Activated CD4-positive, alpha-beta memory T cell treated with anti-CD3 and anti-CD28 coated beads, Interleukin-2, amount 10 ng/mL, durations not matched to agents 7 days and 5 days (primary cell): ENCODE measurements at regions of chr4 and their contacts with region 1.

Region 1: DNA sequence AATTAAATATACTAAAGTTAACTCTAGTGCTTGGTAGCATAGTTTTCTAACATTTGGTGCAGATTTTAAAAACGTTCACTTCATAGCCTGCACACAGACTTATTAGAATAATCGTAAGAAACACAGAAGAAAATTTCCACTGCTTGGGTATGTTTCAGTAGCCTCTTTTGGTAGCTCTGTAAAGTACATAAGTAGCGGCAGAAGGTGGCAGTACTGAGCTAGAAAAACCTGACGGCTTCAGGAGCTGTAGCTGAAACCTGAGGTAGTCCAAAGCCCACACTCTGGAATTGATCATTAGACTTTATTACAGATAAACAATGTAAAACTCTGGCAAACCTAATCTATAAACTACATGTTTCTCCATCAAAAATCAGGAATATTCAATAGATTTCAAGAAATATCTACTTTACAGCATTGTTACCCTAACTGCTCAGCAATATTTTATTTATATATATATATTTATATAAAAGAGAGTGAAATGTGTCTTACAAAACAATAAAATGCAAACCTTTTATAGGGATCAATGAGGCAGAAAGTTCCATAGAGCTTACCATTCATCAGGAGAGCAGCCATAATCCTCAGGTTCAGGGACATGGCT is 88.2 kb downstream of the ATP8A1 start:
- DNase-seq: peak; percentile 63
- H3K4me3 Mint-ChIP-seq: no peak overlapping the region
- H3K27ac Mint-ChIP-seq: no peak overlapping the region
- H3K4me1 Mint-ChIP-seq: no peaks in the 10 kb centered on the region
- H3K27me3 Mint-ChIP-seq: no peaks in the 10 kb centered on the region

Region 2: GRCh38 chr4:42541647-42542046 is 27.1 kb before region 1 on chr4:
- CTCF ChIA-PET with region 1: no interaction called
- POLR2A ChIA-PET with region 1: no interaction called
- DNase-seq: no peak
- H3K4me3 Mint-ChIP-seq: no peak overlapping the region
- H3K27ac Mint-ChIP-seq: no peak overlapping the region
- H3K4me1 Mint-ChIP-seq: peaks cover 6% of the 10 kb centered on the region
- H3K27me3 Mint-ChIP-seq: no peaks in the 10 kb centered on the region

Region 3: DNA sequence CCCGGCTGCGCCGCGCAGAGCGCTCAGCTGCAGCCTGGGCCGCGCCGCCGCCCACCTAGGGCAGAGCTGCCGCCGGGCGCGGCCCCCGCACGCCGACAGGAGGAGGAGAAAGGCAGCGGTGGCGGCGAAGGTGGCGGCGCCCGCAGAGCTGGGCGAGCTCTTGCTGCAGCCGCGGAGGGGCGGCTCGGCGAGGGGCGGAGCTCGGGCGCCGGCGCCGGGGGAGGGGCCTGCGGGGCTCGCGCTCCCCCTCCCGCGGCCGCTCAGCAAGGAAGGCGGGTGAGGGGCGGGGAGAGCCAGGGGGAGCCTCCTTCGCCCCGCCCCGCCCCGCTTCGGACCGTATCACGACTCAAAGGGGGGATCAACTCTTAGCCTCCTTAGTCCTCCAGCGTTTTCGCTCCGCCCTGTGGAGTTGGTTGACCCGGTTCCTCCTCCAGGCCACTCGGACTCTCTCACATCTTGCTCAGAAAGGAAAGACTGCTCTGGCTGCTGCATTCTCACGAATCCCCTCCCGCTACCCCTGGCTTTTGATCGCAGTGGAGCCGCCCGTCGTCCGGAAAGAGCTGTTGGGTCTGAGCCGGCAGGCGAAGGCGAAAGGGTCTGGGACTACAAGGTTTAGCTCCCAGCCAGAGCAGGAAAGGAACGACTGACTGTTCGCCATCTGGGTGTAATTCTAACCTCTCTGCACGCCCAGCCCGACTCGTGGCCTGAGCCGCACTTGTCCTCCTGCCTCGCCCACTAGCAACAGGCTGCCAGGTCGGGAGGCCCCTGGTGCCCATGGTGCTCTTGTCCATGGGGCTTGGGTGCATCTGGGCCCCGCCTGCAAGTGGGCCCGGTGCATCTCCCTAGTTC is 88.5 kb after region 1 on chr4 and contains the start of gene ATP8A1:
- CTCF ChIA-PET with region 1: interaction called, 16 read pairs
- POLR2A ChIA-PET with region 1: no interaction called
- DNase-seq: peak; percentile 94
- H3K4me3 Mint-ChIP-seq: peak within 1 kb of the TSS; percentile 93
- H3K27ac Mint-ChIP-seq: peak within 1 kb of the TSS; percentile 96
- H3K4me1 Mint-ChIP-seq: peaks cover 38% of the 10 kb centered on the region
- H3K27me3 Mint-ChIP-seq: peaks cover 7% of the 10 kb centered on the region
- total RNA-seq, gene ATP8A1: 18.7 to 19.8 TPM

Region 4: GRCh38 chr4:42750091-42750490 is 181.4 kb after region 1 on chr4:
- CTCF ChIA-PET with region 1: interaction called, 12 read pairs
- POLR2A ChIA-PET with region 1: no interaction called
- DNase-seq: no peak
- H3K4me3 Mint-ChIP-seq: no peak overlapping the region
- H3K27ac Mint-ChIP-seq: no peak overlapping the region
- H3K4me1 Mint-ChIP-seq: no peaks in the 10 kb centered on the region
- H3K27me3 Mint-ChIP-seq: peaks cover 3% of the 10 kb centered on the region

Region 5: DNA sequence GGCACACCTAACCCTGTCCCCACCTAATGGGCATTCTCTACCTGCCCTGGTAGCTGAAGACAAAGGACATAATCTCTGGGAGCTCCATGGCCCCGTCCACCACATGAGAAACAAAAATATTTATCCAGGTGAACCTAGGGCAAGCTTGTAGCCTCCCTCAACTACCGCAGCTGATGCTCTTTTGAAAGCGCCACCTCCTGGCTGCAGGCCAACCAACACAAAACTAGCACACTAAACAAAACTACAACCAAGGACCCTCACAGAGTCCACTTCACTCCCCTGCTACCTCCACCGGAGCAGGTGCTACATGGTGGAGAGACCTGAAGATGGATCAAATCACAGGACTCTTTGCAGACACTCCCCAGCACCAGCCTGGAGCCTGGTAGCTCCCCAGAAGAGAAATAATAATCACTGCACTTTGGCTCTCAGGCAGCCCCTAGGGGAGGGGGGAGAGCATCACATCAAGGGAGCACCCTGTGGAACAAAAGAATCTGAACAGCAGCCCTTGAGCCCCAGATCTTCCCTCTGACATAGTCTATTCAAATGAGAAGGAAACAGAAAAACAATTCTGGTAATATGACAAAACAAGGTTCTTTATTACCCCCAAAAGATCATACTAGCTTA is 199.5 kb after region 1 on chr4:
- CTCF ChIA-PET with region 1: interaction called, 13 read pairs
- POLR2A ChIA-PET with region 1: no interaction called
- DNase-seq: no peak
- H3K4me3 Mint-ChIP-seq: no peak overlapping the region
- H3K27ac Mint-ChIP-seq: no peak overlapping the region
- H3K4me1 Mint-ChIP-seq: no peaks in the 10 kb centered on the region
- H3K27me3 Mint-ChIP-seq: peaks cover 3% of the 10 kb centered on the region

Region 6: DNA sequence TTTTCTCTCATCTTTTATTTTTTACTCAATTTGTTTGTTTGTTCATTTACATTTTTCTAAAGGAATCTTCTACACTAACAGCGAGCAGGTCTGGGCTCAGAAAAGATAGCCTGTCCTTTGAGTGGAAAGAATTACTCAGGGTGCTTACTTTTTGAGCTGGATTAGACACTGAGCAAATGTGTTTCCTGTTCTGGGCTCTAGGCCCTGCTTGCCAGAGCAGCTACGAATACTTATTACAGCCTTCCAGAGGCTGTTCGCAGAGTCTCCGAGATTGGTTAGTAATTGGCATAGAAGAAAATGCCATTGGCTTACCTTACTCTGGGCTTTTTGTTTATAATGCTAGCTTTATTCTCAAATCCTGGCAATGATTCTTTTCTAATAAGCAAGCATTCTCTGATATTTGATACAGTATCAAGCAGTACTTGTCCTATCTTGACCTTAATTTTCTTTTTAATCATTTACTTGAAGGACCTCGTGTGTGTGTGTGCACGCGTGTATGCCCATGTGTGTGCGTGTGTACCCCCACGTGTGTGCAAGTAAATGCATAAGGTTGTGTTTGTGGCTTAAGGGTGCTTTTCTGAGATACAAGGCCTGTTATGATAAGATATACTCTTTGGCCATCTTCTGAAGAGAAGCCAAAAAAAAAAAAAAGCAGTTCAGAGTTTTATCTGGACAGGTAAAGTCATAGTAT is 247.6 kb after region 1 on chr4:
- CTCF ChIA-PET with region 1: interaction called, 19 read pairs
- POLR2A ChIA-PET with region 1: no interaction called
- DNase-seq: no peak
- H3K4me3 Mint-ChIP-seq: no peak overlapping the region
- H3K27ac Mint-ChIP-seq: no peak overlapping the region
- H3K4me1 Mint-ChIP-seq: no peaks in the 10 kb centered on the region
- H3K27me3 Mint-ChIP-seq: peaks cover 8% of the 10 kb centered on the region

Region 7: DNA sequence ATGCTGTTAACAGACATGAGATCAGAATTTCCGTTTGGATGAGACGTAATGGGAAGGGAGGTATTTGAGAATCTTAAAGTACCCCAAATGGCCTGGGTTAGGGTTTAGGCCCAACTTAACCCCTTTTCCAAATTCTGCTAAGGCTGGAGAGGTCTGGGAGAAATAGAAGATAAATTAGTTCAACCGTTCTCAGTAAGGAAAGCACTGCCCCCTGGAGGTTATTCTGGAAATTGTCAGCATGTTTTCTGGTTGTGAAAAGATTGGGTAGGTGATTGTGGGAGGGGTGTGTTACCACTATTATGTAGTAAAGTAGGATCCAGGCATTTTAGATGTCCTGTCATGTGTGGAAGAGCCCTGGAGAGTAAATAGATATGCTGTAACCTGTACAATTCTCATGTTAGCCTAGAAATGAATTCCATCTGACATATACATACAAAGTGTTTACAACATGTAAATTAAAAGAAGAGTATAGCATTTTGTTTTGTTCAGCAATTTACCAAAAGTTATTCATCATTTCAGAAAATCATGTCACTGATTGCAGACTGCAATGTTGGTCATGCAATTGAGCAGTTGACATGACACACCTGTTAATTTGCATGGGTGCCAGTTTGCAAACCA is 297.0 kb after region 1 on chr4:
- CTCF ChIA-PET with region 1: interaction called, 35 read pairs
- POLR2A ChIA-PET with region 1: no interaction called
- DNase-seq: peak; percentile 41
- H3K4me3 Mint-ChIP-seq: no peak overlapping the region
- H3K27ac Mint-ChIP-seq: no peak overlapping the region
- H3K4me1 Mint-ChIP-seq: no peaks in the 10 kb centered on the region
- H3K27me3 Mint-ChIP-seq: peaks cover 11% of the 10 kb centered on the region